ENCODE measurements at regions of chr13 and their contacts with region 1.

Region 1: GRCh38 chr13:44577236-44578066 is 1.3 kb upstream of the TSC22D1 start:
- DNase-seq: peak; percentile 97
- ATAC-seq: peak; percentile 79
- H3K4me3 Mint-ChIP-seq: peak overlapping the region; percentile 88
- H3K27ac Mint-ChIP-seq: peak overlapping the region; percentile 87
- H3K4me1 Mint-ChIP-seq: peaks cover 38% of the 10 kb centered on the region
- H3K27me3 Mint-ChIP-seq: peaks cover 6% of the 10 kb centered on the region

Region 2: DNA sequence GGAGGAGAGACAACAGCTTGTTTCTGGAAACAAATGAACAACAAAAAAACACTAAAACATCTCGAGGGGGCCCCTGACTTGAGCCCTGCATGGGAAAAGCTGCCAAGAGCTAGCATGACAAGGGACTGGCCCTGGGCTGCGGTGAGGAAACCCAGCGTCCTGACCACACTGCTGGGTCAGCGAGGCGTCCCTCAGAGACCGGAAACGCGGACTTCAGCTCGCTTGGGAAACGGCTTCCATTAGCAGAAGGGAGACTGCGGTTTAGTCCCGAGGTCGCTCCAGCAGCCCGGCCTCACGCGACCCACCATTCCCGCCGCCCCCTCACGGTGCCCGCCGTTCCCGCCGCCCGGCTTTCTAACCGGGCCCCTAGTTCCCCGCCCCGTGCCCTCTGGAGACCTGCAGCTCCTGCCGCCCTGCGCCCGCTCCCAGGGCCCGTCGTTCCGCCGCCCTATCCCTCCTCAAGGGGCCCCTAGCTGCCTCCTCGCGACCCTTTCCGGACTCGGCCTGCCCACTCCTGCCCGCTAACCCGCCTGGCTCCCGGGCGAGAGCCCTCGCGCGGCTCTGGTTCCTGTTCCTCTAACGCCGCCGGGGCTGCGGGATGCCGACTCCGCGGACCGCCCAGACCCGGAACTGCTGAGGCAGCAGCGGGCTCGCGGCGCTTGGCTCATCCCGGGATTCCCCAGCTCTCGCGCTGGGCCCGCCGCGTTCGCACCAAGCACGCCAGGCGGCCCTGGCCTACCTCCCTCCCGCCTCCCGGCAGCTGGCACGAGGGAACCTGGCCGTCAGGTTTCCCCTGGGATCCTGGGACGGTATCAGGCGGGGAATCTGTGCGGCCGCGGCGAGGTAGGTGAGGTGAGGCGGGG is 698.3 kb before region 1 on chr13 and contains the start of gene CCDC122:
- CTCF ChIA-PET with region 1: no interaction called
- POLR2A ChIA-PET with region 1: no interaction called
- intact Hi-C with region 1: loop called in 1 of 2 experiments (anchors 1 kb)
- DNase-seq: peak; percentile 89
- ATAC-seq: peak; percentile 94
- H3K4me3 Mint-ChIP-seq: peak within 1 kb of the TSS; percentile 79
- H3K27ac Mint-ChIP-seq: peak within 1 kb of the TSS; percentile 82
- H3K4me1 Mint-ChIP-seq: peaks cover 22% of the 10 kb centered on the region
- H3K27me3 Mint-ChIP-seq: peaks cover 13% of the 10 kb centered on the region
- total RNA-seq, gene CCDC122: 2.0 to 3.1 TPM

Region 3: DNA sequence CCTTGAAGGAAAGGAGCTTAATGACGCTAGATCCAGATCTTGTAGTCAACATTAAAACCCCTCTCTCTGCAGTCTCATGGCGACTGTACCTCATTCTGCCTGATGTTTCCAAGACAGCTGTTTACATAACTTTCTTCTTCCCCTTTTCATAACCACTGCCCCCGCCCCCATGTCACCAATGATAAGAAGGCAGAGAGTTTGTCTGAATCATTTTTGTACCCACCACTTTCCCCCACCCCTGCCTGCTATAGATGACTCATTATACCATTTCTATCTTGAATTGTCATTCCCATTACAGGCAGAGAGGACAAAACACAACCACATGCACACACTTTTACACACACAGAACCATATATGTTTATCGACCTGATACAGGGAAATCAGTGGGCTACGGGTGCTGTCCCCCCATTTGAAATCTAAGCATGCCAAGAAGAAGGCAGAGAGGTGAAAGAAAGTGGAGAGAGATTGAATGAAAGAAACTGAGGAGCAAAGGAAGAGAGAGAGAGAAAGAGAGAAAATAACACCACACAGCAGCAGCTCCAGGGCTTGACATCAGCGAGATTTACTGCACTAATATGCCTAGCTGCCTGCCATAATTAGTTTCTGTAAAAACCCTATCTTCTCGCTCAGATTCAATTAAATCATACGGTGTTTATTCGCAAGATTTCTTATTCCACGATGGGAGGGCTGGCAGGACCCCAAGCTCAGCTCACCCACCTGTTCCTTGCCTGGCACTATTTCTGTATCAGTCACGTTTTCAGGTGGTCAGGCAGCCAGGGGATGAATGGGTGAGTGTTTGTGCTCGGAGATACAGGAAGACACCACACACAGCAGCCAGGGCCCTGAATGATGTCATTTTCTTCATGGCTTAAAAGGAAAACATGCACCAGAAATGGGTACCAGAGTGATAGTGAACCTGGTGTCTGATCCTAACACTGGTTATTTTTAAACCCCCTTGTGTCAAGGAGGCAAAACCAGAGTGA is 318.1 kb before region 1 on chr13:
- CTCF ChIA-PET with region 1: no interaction called
- POLR2A ChIA-PET with region 1: no interaction called
- intact Hi-C with region 1: loop called in 1 of 2 experiments (anchors 10 kb)
- DNase-seq: peak; percentile 90
- ATAC-seq: peak; percentile 87
- H3K4me3 Mint-ChIP-seq: peak overlapping the region; percentile 62
- H3K27ac Mint-ChIP-seq: peak overlapping the region; percentile 94
- H3K4me1 Mint-ChIP-seq: peaks cover 21% of the 10 kb centered on the region
- H3K27me3 Mint-ChIP-seq: peaks cover 5% of the 10 kb centered on the region

Region 4: GRCh38 chr13:44605275-44605674 is 27.8 kb after region 1 on chr13:
- CTCF ChIA-PET with region 1: no interaction called
- POLR2A ChIA-PET with region 1: no interaction called
- intact Hi-C with region 1: no loop called
- DNase-seq: no peak
- ATAC-seq: no peak
- H3K4me3 Mint-ChIP-seq: no peak overlapping the region
- H3K27ac Mint-ChIP-seq: no peak overlapping the region
- H3K4me1 Mint-ChIP-seq: no peaks in the 10 kb centered on the region
- H3K27me3 Mint-ChIP-seq: peaks cover 2% of the 10 kb centered on the region

Region 5: GRCh38 chr13:44648392-44649103 is 71.1 kb after region 1 on chr13:
- CTCF ChIA-PET with region 1: interaction called, 3 read pairs
- POLR2A ChIA-PET with region 1: no interaction called
- intact Hi-C with region 1: loop called (anchors 1 to 5 kb)
- DNase-seq: peak; percentile 25
- ATAC-seq: peak; percentile 85
- H3K4me3 Mint-ChIP-seq: no peak overlapping the region
- H3K27ac Mint-ChIP-seq: peak overlapping the region; percentile 37
- H3K4me1 Mint-ChIP-seq: peaks cover 23% of the 10 kb centered on the region
- H3K27me3 Mint-ChIP-seq: peaks cover 26% of the 10 kb centered on the region

Region 6: DNA sequence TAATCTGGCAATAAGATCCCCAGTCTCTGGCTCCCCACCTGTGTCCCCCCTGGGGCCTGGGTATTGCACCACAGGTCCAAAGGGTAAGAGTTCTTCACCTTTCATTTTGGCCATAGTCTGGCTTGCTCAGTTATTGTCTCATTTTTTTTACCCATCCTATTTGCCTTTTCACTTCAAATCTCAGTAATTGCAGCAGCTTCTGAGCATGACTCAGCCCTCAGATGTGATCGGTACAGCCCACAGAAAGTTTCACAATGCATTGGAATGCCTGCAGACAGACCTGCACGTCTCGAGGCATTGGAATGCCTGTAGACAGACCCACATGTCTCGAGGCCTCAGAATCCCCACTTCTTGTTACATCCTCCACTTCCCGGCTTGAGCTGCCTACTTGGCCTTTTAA is 238.2 kb after region 1 on chr13:
- CTCF ChIA-PET with region 1: no interaction called
- POLR2A ChIA-PET with region 1: no interaction called
- intact Hi-C with region 1: loop called (anchors 1 to 5 kb)
- DNase-seq: peak; percentile 70
- ATAC-seq: peak; percentile 85
- H3K4me3 Mint-ChIP-seq: no peak overlapping the region
- H3K27ac Mint-ChIP-seq: no peak overlapping the region
- H3K4me1 Mint-ChIP-seq: peaks cover 32% of the 10 kb centered on the region
- H3K27me3 Mint-ChIP-seq: peaks cover 22% of the 10 kb centered on the region

Region 7: GRCh38 chr13:45119991-45120864 is 542.8 kb after region 1 on chr13 and contains the start of gene GTF2F2:
- CTCF ChIA-PET with region 1: no interaction called
- POLR2A ChIA-PET with region 1: no interaction called
- intact Hi-C with region 1: loop called in 1 of 2 experiments (anchors 1 kb)
- DNase-seq: peak; percentile 90
- ATAC-seq: peak; percentile 68
- H3K4me3 Mint-ChIP-seq: no peak within 1 kb of the TSS
- H3K27ac Mint-ChIP-seq: no peak within 1 kb of the TSS
- H3K4me1 Mint-ChIP-seq: peaks cover 5% of the 10 kb centered on the region
- H3K27me3 Mint-ChIP-seq: no peaks in the 10 kb centered on the region
- total RNA-seq, gene GTF2F2: 19.9 to 25.6 TPM

Region 8: DNA sequence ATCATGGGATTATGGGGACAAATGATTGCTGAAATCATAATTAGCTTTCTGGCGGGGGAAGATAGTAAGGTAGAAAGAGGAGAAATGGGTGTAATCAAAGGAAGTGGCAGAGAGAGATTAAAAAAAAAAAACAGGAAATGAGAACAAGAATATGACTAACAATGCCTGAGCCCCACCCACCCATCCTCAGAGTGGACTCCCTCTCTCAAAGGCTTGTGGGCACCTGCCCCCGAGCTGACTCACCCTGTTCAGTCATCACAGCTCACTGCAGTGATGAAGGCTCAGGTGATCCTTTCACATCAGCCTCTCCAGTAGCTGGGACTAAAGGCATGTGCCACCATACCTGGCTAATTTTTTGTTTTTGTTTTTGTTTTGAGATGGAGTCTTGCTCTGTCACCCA is 789.9 kb after region 1 on chr13:
- CTCF ChIA-PET with region 1: no interaction called
- POLR2A ChIA-PET with region 1: no interaction called
- intact Hi-C with region 1: loop called in 1 of 2 experiments (anchors 1 kb)
- DNase-seq: peak; percentile 96
- ATAC-seq: peak; percentile 100
- H3K4me3 Mint-ChIP-seq: peak overlapping the region; percentile 21
- H3K27ac Mint-ChIP-seq: peak overlapping the region; percentile 89
- H3K4me1 Mint-ChIP-seq: peaks cover 53% of the 10 kb centered on the region
- H3K27me3 Mint-ChIP-seq: no peaks in the 10 kb centered on the region